Activated CD4-positive, alpha-beta memory T cell treated with anti-CD3 and anti-CD28 coated beads for 36 hours (primary cell): ENCODE measurements at regions of chr2 and their contacts with region 1.

Region 1: DNA sequence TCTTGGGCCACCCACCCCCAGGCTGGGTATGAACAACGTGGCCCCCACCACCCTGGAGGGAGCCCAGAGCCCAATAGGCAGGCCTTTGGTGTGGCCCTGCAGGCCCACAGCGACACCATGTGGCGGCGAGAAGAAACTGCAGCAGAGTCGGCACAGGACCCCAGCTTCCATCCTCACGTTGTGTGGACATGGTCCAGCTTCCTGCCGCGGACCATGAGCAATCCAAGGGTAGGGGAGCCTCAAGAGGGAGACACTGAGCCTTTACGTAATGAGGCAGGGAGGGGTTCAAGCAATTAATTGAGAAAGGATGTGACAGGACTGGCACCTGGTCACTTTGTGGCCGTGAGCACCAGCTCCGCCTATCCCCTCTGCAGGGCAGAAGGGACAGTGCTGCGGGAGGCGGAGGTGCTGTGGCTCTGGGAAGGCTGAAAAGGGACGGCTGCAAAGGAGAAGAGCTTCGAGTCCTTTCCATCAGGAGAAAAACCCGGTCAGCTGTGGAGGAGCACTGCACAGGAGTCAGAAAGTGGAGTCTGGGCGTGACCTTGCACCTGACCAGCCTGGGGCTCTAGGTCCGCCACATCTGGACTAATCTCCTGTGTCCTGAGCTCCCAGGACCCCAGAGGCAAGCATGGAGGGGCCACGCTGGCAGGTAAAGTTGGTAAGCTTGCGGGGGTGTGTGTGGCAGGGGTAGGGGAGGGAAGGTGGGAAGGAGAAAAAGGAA is 44.8 kb downstream of the TMEM37 start:
- DNase-seq: peak; percentile 42
- H3K4me3 Mint-ChIP-seq: no peak overlapping the region
- H3K27ac Mint-ChIP-seq: no peak overlapping the region
- H3K4me1 Mint-ChIP-seq: no peaks in the 10 kb centered on the region
- H3K27me3 Mint-ChIP-seq: peaks cover 12% of the 10 kb centered on the region

Region 2: DNA sequence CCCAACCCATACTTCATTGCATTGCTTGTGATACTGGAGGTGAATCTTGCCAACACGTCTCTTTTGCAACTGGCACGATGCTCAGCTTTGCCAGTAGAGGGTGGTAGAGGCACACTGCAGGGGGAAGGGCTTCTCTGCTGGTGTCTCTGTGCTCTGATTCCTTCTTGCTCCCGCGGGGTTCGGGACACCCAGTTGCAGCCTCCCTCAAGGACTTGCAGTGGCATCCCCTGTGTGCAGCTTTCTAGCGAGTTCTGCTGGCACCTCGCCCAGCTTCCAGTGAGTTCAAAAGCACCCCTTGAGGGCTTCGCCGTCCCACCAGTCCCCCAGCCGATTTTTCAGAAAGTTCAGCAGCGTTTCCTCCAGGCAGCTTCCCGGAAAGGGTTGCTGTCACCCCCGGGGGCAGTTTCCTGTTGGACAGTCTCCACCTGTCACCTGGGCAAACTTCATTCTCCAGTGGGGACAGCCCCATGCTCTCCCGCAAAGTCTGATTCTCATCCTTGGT is 593.7 kb before region 1 on chr2:
- CTCF ChIA-PET with region 1: interaction called, 11 read pairs
- POLR2A ChIA-PET with region 1: no interaction called
- intact Hi-C with region 1: no loop called
- DNase-seq: peak; percentile 59
- H3K4me3 Mint-ChIP-seq: peak overlapping the region; percentile 29
- H3K27ac Mint-ChIP-seq: no peak overlapping the region
- H3K4me1 Mint-ChIP-seq: no peaks in the 10 kb centered on the region
- H3K27me3 Mint-ChIP-seq: peaks cover 25% of the 10 kb centered on the region

Region 3: GRCh38 chr2:119407430-119408220 is 68.8 kb before region 1 on chr2:
- CTCF ChIA-PET with region 1: interaction called, 9 read pairs
- POLR2A ChIA-PET with region 1: no interaction called
- intact Hi-C with region 1: loop called (anchors 1 kb)
- DNase-seq: peak; percentile 35
- H3K4me3 Mint-ChIP-seq: no peak overlapping the region
- H3K27ac Mint-ChIP-seq: no peak overlapping the region
- H3K4me1 Mint-ChIP-seq: no peaks in the 10 kb centered on the region
- H3K27me3 Mint-ChIP-seq: peaks cover 3% of the 10 kb centered on the region

Region 4: GRCh38 chr2:119487434-119488244 is 11.2 kb after region 1 on chr2:
- CTCF ChIA-PET with region 1: interaction called, 21 read pairs
- POLR2A ChIA-PET with region 1: no interaction called
- intact Hi-C with region 1: no loop called
- DNase-seq: no peak
- H3K4me3 Mint-ChIP-seq: no peak overlapping the region
- H3K27ac Mint-ChIP-seq: no peak overlapping the region
- H3K4me1 Mint-ChIP-seq: no peaks in the 10 kb centered on the region
- H3K27me3 Mint-ChIP-seq: peaks cover 1% of the 10 kb centered on the region